Left colon (tissue), 2 donors: ENCODE measurements at regions of chr15 and their contacts with region 1.

Region 1: DNA sequence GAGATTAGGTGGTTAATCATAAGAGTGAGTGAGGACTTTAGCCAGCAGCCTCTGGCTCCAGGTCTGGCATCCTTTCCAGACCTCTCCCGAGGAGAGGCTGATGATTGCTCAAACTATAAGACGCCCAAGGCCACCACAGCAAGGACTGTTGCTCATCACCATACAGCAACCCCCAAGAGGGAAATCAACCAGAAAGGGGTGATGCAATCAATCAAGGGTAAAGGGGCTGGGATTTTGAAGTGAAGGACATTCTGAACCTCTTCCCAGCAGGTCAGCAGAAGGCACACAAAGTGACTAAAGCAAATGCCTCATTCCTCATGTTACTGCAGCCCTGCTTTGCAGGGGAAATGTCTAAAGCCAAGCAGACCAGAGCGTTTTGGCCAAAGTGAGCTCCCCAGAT is 247.3 kb upstream of the IGF1R start:
- DNase-seq: no peak
- ATAC-seq: no peak

Region 2: GRCh38 chr15:97791824-97792792 is 608.9 kb before region 1 on chr15:
- intact Hi-C with region 1: loop called in 1 of 2 experiments (anchors 10 kb)
- DNase-seq: peak in 1 of 2 donors; percentile 27
- ATAC-seq: no peak